Mucosa of descending colon (tissue), 3 donors: ENCODE measurements at regions of chr9 and their contacts with region 1.

Region 1: DNA sequence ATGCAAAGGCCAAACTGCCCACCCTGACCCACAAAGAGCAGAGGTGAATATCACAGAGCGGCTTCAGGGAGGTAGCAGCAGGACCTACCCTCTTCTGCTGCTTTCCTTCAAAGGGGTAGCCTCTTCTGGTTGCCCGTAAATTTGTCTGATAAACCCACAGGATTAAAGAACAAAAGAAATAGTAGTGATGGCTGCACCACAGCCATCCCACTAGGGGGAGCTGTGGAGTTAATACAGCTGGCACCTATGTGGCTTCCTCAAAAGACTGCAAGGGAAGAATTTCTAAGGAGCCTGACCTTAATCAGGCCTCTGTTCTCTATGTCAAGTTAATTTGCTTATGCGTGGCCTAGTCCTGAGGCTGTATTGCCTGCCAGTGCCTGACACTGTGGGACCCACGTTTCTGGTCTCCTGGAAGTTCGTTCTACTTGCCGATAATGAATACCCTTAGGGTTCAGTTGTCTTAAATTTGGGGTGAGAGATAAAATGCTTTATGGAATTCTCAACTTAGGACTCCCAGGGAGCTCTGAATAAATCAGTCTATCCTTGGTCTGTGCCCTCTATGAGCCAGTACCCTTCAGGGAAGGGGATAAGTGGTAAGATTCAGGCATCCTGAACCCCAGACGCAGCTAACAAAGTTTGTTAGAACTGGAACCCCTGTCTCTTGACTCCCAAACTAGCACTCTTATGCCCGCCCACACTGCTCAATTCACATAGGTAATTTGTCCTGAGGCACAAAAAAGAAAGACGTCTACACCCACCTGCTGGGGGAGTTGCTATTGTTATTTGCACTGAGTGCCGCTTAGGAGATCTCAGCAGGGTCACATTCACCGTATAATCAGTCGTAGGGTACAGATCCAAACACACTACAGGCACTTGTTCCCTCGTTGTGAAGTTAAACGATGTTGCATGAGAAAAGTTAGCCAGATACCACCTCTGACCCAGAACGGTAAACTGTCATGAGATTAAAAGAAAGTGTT is 77.1 kb downstream of the SUSD1 start:
- DNase-seq: peak in 2 of 3 donors; percentile 54 to 78
- ATAC-seq: peak; percentile 91
- H3K4me3 ChIP-seq: no peak overlapping the region
- H3K4me1 ChIP-seq: peaks cover 5% of the 10 kb centered on the region
- CTCF ChIP-seq: peak; percentile 82

Region 2: DNA sequence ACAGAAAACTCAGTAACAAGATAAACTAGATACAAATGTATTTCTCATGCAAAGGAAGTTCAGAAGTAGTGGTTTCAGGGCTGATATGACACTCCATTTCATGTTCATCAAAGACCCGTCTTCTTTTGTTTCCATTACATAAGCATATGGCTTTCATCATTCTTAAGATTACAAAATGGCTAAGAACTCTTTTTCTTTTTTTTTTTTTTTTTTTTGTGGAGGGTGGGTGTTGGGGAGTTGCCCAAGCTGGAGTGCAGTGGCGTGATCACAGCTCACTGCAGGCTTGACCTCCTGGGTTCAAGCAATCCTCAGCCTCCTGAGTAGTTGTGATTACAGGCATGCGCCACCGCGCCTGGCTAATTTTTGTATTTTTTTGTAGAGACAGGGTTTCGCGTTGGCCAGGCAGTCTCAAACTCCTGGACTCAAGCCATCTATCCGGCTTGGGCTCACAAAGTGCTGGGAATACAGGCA is 257.5 kb after region 1 on chr9:
- intact Hi-C with region 1: loop called (anchors 5 to 10 kb)
- DNase-seq: no peak
- ATAC-seq: no peak
- H3K4me3 ChIP-seq: no peak overlapping the region
- H3K4me1 ChIP-seq: no peaks in the 10 kb centered on the region
- CTCF ChIP-seq: no peak